ENCODE measurements at regions of chr20 and their contacts with region 1.

Region 1: DNA sequence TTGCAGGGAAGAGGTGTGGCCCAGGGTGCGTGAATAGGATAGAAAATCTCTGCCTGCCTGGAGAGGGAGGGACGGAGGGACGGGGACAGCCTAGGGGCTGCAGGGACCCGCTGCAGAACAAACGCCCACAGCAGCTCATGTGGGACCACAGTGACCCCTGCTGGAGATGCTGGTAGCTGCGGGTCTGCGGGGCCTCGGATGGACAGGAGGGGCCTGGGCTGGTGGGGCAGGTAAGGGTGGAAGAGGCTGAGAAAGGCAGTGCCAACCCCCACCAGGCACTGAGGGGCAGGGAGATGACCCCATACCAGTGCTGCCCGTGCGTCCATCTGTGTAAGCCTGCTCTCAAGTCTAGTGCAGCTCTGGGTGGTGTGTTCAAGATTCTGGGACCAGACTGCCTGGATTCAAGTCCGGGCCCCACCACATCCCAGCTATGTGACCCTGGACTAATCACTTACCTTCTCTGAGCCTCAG is 39.4 kb downstream of the KIAA1755 start:
- DNase-seq: peak; percentile 70
- H3K4me3 Mint-ChIP-seq: no peak overlapping the region
- H3K27ac Mint-ChIP-seq: no peak overlapping the region
- H3K4me1 Mint-ChIP-seq: peaks cover 21% of the 10 kb centered on the region
- H3K27me3 Mint-ChIP-seq: no peaks in the 10 kb centered on the region
- CTCF ChIP-seq: peak; percentile 92

Region 2: GRCh38 chr20:37901654-37902503 is 319.3 kb before region 1 on chr20:
- CTCF ChIA-PET with region 1: no interaction called
- POLR2A ChIA-PET with region 1: no interaction called
- intact Hi-C with region 1: loop called (anchors 1 kb)
- DNase-seq: peak; percentile 81
- H3K4me3 Mint-ChIP-seq: peak overlapping the region; percentile 86
- H3K27ac Mint-ChIP-seq: no peak overlapping the region
- H3K4me1 Mint-ChIP-seq: peaks cover 33% of the 10 kb centered on the region
- H3K27me3 Mint-ChIP-seq: no peaks in the 10 kb centered on the region
- CTCF ChIP-seq: peak; percentile 45

Region 3: GRCh38 chr20:38073307-38074071 is 147.7 kb before region 1 on chr20:
- CTCF ChIA-PET with region 1: interaction called, 782 read pairs
- POLR2A ChIA-PET with region 1: interaction called, 33 read pairs
- intact Hi-C with region 1: loop called (anchors 1 kb)
- DNase-seq: peak; percentile 94
- H3K4me3 Mint-ChIP-seq: peak overlapping the region; percentile 31
- H3K27ac Mint-ChIP-seq: peak overlapping the region; percentile 44
- H3K4me1 Mint-ChIP-seq: peaks cover 21% of the 10 kb centered on the region
- H3K27me3 Mint-ChIP-seq: no peaks in the 10 kb centered on the region
- CTCF ChIP-seq: peak; percentile 47

Region 4: DNA sequence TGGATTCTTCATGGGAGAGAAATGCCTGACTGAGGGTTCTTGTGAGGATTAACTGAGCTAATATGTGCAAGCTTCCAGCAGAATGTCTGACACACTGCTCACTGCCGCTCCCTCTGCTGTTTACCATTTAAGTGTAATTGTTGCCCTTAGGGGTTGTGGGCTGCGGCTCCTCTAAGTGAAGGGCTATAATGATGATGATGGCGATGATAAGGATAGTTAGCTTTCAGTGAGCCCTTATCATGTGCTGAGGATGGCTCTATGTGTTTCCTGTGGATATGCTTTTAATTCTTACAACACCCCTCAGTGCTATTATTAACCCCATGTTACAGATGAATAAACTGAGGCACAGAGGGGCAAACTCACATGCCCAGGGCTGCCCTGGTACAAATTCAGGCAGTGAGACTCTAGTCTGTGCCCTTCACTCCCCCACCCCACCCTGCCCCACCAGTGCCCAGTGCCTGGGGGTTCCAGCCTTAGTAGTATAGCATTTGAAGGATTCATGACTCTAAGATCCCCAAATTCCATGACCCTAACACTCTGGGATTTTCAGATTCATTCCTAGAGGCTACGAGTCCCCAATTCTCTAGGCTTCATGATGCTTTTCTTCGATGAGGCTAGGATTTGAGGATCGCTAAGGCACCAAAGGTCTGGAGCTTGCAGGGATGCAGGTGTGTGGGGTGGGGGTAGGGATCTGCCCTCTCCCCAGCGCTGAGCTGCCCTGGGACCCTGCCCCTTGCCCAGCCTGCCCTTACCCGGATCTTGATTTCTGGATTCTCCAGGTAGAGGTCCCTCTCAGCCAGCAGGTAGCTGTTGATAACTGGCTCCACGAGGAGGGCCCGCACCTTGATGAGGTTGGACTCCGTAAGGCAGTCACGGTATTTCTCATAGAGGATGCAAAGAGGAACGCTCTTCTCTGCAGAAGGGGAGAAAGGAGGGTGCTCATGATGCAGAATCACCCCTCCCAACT is 89.3 kb before region 1 on chr20:
- CTCF ChIA-PET with region 1: interaction called, 19 read pairs
- POLR2A ChIA-PET with region 1: interaction called, 4 read pairs
- intact Hi-C with region 1: no loop called
- DNase-seq: peak; percentile 20
- H3K4me3 Mint-ChIP-seq: no peak overlapping the region
- H3K27ac Mint-ChIP-seq: no peak overlapping the region
- H3K4me1 Mint-ChIP-seq: peaks cover 16% of the 10 kb centered on the region
- H3K27me3 Mint-ChIP-seq: no peaks in the 10 kb centered on the region
- CTCF ChIP-seq: no peak

Region 5: GRCh38 chr20:38173237-38174156 is 47.7 kb before region 1 on chr20:
- CTCF ChIA-PET with region 1: interaction called, 146 read pairs
- POLR2A ChIA-PET with region 1: interaction called, 17 read pairs
- intact Hi-C with region 1: loop called (anchors 1 kb)
- DNase-seq: peak; percentile 84
- H3K4me3 Mint-ChIP-seq: no peak overlapping the region
- H3K27ac Mint-ChIP-seq: peak overlapping the region; percentile 2
- H3K4me1 Mint-ChIP-seq: peaks cover 36% of the 10 kb centered on the region
- H3K27me3 Mint-ChIP-seq: no peaks in the 10 kb centered on the region
- CTCF ChIP-seq: no peak

Region 6: GRCh38 chr20:38210741-38211140 is 10.4 kb before region 1 on chr20:
- CTCF ChIA-PET with region 1: interaction called, 153 read pairs
- POLR2A ChIA-PET with region 1: interaction called, 3 read pairs
- intact Hi-C with region 1: no loop called
- DNase-seq: peak; percentile 57
- H3K4me3 Mint-ChIP-seq: no peak overlapping the region
- H3K27ac Mint-ChIP-seq: no peak overlapping the region
- H3K4me1 Mint-ChIP-seq: no peaks in the 10 kb centered on the region
- H3K27me3 Mint-ChIP-seq: no peaks in the 10 kb centered on the region
- CTCF ChIP-seq: no peak

Region 7: GRCh38 chr20:38290832-38291581 is 69.9 kb after region 1 on chr20:
- CTCF ChIA-PET with region 1: interaction called, 10 read pairs
- POLR2A ChIA-PET with region 1: no interaction called
- intact Hi-C with region 1: no loop called
- DNase-seq: no peak
- H3K4me3 Mint-ChIP-seq: no peak overlapping the region
- H3K27ac Mint-ChIP-seq: no peak overlapping the region
- H3K4me1 Mint-ChIP-seq: no peaks in the 10 kb centered on the region
- H3K27me3 Mint-ChIP-seq: no peaks in the 10 kb centered on the region
- CTCF ChIP-seq: no peak

Region 8: DNA sequence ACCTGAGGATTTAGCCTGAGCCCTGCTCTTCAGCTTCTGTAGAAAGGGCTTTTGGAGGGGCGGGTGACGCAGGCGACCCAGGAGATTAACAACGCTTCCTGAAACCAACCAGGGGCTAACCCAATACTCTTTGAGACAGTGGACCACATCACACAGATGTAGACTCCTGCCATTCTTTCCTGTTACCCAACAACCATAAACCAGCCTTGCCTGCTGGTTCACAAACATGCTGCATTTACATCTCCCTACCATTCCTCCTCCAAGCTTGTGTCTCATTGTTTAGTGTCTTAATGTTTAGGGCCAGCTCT is 612.7 kb after region 1 on chr20:
- CTCF ChIA-PET with region 1: no interaction called
- POLR2A ChIA-PET with region 1: no interaction called
- intact Hi-C with region 1: no loop called
- DNase-seq: no peak
- H3K4me3 Mint-ChIP-seq: no peak overlapping the region
- H3K27ac Mint-ChIP-seq: no peak overlapping the region
- H3K4me1 Mint-ChIP-seq: no peaks in the 10 kb centered on the region
- H3K27me3 Mint-ChIP-seq: peaks cover 15% of the 10 kb centered on the region
- CTCF ChIP-seq: no peak

Measured in MCF 10A (cell line).